BJ (cell line): ENCODE measurements at regions of chr1 and their contacts with region 1.

Region 1: DNA sequence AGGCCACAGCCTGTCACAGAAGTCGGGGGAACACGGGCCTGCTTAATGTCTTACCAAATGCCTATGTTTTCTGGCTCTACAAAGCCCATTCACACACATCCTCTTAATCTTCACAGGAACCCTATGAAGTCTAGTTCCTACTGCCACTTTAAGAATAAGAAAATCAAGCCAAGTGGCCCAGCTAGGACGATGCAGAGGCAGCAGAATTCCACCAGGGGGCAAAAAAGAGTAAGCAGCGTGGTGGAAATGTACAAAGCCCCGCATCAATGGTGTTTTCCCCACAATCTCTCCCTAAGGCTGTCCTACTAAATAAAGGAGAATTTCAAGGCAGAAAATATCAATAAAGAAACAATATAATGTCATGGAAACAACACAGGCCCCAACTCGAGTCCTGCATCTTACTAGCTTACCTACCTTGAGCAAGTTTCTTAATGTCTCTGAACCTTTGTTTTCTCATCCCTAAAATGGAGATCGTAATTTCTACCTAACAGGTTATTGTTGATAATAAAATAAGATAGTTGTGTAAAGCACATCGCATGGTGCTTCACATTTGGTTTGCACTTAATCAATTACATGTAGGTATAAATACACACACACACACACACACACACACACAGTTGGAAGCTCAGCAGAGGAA is 21.4 kb downstream of the SEC16B start:
- DNase-seq: no peak
- H3K4me3 ChIP-seq: no peak overlapping the region
- H3K27me3 ChIP-seq: no peaks in the 10 kb centered on the region
- CTCF ChIP-seq: peak; percentile 96

Region 2: GRCh38 chr1:176897350-176898236 is 1050.9 kb before region 1 on chr1:
- CTCF ChIA-PET with region 1: interaction called, 19 read pairs
- POLR2A ChIA-PET with region 1: no interaction called
- DNase-seq: no peak
- H3K4me3 ChIP-seq: no peak overlapping the region
- H3K27me3 ChIP-seq: peaks cover 4% of the 10 kb centered on the region; the same call in 1 of the 2 replicates
- CTCF ChIP-seq: peak; percentile 96

Region 3: GRCh38 chr1:177820213-177820612 is 128.2 kb before region 1 on chr1:
- CTCF ChIA-PET with region 1: interaction called, 10 read pairs
- POLR2A ChIA-PET with region 1: no interaction called
- DNase-seq: no peak
- H3K4me3 ChIP-seq: no peak overlapping the region
- H3K27me3 ChIP-seq: peaks cover 1% of the 10 kb centered on the region; the same call in 1 of the 2 replicates
- CTCF ChIP-seq: 0 out of 2 replicates have a peak, but pooled peaks have one; percentile 2

Region 4: GRCh38 chr1:177864538-177865305 is 83.7 kb before region 1 on chr1:
- CTCF ChIA-PET with region 1: no interaction called
- POLR2A ChIA-PET with region 1: no interaction called
- DNase-seq: no peak
- H3K4me3 ChIP-seq: no peak overlapping the region
- H3K27me3 ChIP-seq: no peaks in the 10 kb centered on the region
- CTCF ChIP-seq: no peak

Region 5: GRCh38 chr1:177928194-177928593 is 20.3 kb before region 1 on chr1:
- CTCF ChIA-PET with region 1: interaction called, 41 read pairs
- POLR2A ChIA-PET with region 1: no interaction called
- DNase-seq: no peak
- H3K4me3 ChIP-seq: no peak overlapping the region
- H3K27me3 ChIP-seq: no peaks in the 10 kb centered on the region
- CTCF ChIP-seq: peak; percentile 43

Region 6: DNA sequence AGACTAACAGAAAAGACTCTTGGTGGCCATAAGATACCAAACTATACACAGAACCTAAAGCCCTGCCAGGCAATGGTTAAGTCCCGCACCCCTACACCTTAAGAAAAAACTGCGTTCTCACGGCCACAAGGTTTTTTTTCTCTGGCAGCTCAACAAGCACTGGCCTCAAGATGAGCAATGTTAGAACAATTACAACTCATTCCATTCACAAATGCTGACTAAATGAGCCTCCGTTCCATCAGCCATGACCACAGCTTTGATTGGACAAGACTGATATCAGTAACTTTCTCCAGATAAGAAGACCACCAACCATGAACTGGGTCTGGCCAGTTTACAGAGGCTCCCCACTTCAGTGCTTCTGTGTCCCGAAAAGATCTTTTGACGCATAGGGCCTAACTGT is 10.5 kb before region 1 on chr1:
- CTCF ChIA-PET with region 1: interaction called, 19 read pairs
- POLR2A ChIA-PET with region 1: no interaction called
- DNase-seq: peak; percentile 35
- H3K4me3 ChIP-seq: no peak overlapping the region
- H3K27me3 ChIP-seq: no peaks in the 10 kb centered on the region
- CTCF ChIP-seq: no peak

Region 7: DNA sequence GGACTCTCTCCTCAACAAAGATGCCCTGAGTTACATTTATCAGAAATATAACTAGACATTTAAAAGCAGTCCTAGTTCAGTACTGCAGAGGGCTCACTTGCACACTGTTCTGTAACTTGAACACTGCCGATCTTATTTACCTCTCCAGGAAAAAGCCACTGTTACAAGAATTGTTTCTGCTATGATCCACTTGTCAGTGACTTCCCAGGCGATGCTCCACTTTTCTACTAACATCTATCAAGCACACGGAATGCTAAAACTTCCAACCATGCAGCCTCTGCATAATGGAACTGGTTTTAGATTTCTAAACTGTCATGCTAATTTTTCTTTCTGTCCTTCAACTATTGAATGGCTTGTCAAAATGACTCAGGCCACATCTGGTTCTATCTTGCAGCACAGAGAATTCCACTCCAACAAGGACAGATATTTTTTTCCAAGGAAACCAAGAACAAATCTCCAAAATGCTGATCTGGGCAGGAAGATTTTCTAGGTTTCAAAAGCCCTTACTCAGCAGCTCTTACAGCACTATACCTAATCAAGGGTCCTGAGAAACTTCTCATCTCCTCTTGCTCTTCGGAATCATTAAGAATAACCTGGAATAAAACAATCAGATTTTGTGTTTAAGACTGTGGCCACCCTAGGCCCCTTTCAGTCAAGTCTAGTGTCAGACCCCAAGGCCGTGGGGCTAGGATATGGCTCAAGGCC is 11.5 kb after region 1 on chr1:
- CTCF ChIA-PET with region 1: interaction called, 12 read pairs
- POLR2A ChIA-PET with region 1: no interaction called
- DNase-seq: no peak
- H3K4me3 ChIP-seq: no peak overlapping the region
- H3K27me3 ChIP-seq: no peaks in the 10 kb centered on the region
- CTCF ChIP-seq: peak; percentile 46

Region 8: DNA sequence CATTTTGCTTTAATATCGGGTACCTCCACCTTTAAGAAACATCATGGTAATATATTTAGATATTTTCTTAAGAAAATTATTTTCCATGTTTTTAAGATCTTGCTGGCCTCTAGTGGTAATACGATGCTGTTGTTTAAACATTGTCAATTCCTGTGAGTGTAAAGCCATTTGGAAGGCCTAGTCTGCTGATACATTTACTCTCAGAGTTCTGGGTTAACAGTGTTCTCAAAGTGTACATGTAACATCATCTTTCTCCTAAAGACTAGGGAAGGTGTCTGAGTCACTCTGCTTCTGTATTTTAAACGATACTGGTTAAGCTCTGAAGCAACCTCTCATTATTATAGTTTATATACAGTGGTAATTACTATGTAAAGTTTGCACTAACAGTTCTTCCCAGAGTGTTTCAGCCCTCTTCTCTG is 334.5 kb after region 1 on chr1:
- CTCF ChIA-PET with region 1: interaction called, 18 read pairs
- POLR2A ChIA-PET with region 1: no interaction called
- DNase-seq: no peak
- H3K4me3 ChIP-seq: no peak overlapping the region
- H3K27me3 ChIP-seq: no peaks in the 10 kb centered on the region
- CTCF ChIP-seq: peak; percentile 62